Vagina (tissue), 2 donors: ENCODE measurements at regions of chr5 and their contacts with region 1.

Region 1: DNA sequence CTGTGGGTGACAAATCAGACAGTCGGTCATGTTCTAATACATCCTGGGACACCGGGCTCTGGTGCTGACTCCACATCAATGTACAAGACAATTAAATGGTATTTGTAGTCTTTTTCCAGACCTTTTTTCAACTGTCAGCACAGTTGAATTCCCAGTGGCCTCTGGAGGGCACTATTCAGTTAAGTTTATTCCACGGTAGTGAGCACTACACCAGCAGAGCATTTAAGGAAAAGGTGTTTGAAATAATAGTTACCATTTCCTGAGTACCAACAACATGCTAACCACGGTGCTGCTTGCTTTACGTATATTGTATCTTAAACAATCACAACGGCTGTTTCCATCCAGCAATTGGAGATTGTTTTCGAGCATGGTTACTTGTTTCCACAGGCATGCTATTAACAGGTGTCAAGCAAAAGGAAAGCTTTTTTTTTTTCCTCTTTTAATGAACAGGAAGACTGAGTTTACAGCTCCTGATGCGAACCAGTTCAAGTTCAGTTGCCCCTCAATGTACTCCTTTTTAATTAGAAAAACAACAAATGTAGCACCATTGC is 186.7 kb downstream of the PDZD2 start:
- DNase-seq: no peak
- H3K4me3 ChIP-seq: no peak overlapping the region
- H3K27ac ChIP-seq: no peak overlapping the region
- H3K4me1 ChIP-seq: no peaks in the 10 kb centered on the region
- H3K27me3 ChIP-seq: no peaks in the 10 kb centered on the region
- CTCF ChIP-seq: peak; percentile 19 to 72 (median 42)
- POLR2A ChIP-seq: no peak

Region 2: DNA sequence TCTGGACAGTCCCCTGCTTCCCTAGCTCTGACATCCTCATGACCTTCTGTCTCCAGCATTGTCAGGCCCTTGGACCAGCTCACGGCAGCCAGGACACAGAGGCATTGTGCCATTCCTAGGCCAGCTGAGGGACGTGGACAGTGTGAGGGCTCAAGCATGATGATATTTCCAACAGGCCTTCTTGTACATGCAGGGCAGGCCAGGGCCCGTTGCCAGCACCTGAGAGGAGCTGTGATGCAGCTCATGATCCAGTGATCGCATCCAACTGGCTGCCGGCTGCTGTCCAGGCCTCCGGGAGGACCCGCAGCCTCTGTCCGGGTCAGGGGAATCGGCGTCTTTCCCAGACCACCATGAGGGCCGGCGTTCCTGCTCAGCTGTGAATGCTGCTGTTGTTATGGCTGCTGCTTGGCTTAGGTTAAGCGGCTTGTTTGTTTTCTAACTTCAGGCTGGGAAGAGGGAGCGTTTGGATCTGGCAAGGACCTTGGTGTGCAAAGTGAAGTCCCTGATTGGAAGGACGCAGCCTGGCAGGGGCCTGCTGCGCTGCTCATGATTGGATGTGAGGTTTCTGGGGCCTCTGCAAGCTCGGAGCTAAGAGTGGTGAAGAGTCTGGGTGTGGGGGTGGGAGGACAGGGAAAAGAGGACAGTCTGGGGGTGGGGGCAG is 132.9 kb before region 1 on chr5:
- intact Hi-C with region 1: no loop called
- DNase-seq: no peak
- H3K4me3 ChIP-seq: no peak overlapping the region
- H3K27ac ChIP-seq: no peak overlapping the region
- H3K4me1 ChIP-seq: no peaks in the 10 kb centered on the region
- H3K27me3 ChIP-seq: no peaks in the 10 kb centered on the region
- CTCF ChIP-seq: no peak
- POLR2A ChIP-seq: no peak

Region 3: GRCh38 chr5:32076699-32077695 is 251.4 kb after region 1 on chr5:
- intact Hi-C with region 1: loop called (anchors 5 kb)
- DNase-seq: no peak
- H3K4me3 ChIP-seq: no peak overlapping the region
- H3K27ac ChIP-seq: no peak overlapping the region
- H3K4me1 ChIP-seq: no peaks in the 10 kb centered on the region
- H3K27me3 ChIP-seq: no peaks in the 10 kb centered on the region
- CTCF ChIP-seq: peak; percentile 50 to 71 (median 69)
- POLR2A ChIP-seq: no peak